ENCODE measurements at regions of chr3 and their contacts with region 1.

Region 1: DNA sequence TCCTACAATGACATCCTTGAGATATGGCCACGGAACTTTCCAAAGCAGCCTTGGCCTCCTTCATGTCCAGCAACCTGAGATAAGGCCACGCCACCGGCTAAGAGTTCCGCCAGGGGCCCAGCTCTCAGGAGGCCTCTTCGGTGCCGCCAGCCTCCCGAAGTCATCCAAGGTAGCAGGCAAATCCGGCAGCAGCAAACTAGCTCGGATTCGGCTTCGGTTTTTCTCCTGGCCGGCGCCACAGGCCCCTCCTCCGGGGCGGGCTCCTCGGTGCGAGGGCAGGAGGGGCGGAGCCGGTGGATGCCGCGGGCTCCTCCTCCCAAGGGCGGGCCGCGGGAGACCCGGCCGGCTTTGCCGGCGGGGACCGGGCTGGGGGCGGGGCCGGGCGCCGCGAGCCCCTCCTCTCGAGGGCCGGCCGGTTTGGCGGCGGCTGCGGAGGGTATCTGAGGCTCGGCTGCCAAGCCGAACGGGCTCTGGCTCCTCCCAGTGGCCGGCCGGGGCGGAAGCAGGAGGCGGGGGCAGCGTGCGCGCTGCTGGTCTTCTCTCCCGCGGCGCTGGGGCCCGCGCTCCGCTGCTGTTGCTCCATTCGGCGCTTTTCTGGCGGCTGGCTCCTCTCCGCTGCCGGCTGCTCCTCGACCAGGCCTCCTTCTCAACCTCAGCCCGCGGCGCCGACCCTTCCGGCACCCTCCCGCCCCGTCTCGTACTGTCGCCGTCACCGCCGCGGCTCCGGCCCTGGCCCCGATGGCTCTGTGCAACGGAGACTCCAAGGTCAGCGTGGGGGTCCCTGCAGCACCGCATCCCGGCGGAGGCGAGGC is at the start of gene GMPS:
- DNase-seq: peak; percentile 61
- ATAC-seq: peak; percentile 92
- H3K4me3 ChIP-seq: peak within 1 kb of the TSS; percentile 85
- H3K27ac ChIP-seq: peak within 1 kb of the TSS; percentile 89
- H3K4me1 ChIP-seq: peaks cover 2% of the 10 kb centered on the region
- H3K27me3 ChIP-seq: no peaks in the 10 kb centered on the region
- CTCF ChIP-seq: peak; percentile 26 to 82 (median 43); a peak in 4 of 6 replicates
- EP300 ChIP-seq: 0 out of 4 replicates have a peak, but pooled peaks of 1 of the 2 experiments have one; percentile 9
- POLR2A ChIP-seq: peak; percentile 91
- RAD21 ChIP-seq: peak; percentile 45
- polyA plus RNA-seq, gene GMPS: 43.3 to 56.2 TPM

Region 2: DNA sequence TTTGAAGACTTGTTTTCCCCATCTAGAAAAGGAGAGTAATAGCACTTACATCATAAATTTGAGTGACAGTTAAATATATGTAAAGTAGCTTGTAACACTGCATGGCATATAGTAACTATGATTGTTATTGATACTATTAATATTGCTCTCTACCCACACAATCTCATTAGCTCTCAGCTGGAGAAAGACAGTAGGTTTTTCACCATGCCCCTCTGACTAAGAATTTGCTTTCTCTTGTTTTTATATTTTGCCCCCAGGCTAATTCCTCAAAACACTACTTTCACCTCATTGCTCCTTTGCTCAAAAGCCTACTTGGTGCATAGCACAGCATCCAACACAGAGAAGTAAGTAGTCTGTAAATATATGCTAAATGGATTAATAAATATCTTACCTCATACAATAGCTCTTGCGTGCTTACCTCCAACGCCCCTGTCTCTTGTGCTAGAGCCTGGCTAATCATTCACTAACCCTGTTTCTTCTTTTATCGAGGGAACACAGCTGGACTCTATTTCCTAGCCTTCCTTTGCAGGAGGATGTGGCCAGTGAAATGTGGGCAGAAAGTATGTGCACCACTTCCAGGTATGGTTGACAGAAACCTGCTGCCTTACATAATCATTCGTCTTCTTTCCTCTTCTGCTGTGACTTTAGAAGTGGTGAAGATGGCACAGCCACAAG is 315.4 kb before region 1 on chr3:
- CTCF ChIA-PET with region 1: no interaction called
- POLR2A ChIA-PET with region 1: no interaction called
- RAD21 ChIA-PET with region 1: no interaction called
- SMC1A ChIA-PET with region 1: no interaction called
- in situ Hi-C with region 1: no loop called
- intact Hi-C with region 1: loop called (anchors 10 kb)
- DNase-seq: peak; percentile 39
- ATAC-seq: peak; percentile 81
- H3K4me3 ChIP-seq: no peak overlapping the region
- H3K27ac ChIP-seq: no peak overlapping the region
- H3K4me1 ChIP-seq: no peaks in the 10 kb centered on the region
- H3K27me3 ChIP-seq: no peaks in the 10 kb centered on the region; a peak in 1 of 4 replicates
- CTCF ChIP-seq: no peak
- EP300 ChIP-seq: no peak; a peak in 1 of 4 replicates
- POLR2A ChIP-seq: no peak
- RAD21 ChIP-seq: no peak

Region 3: GRCh38 chr3:155753036-155753639 is 117.2 kb before region 1 on chr3:
- CTCF ChIA-PET with region 1: interaction called, 10 read pairs
- POLR2A ChIA-PET with region 1: no interaction called
- RAD21 ChIA-PET with region 1: no interaction called
- SMC1A ChIA-PET with region 1: interaction called, 3 read pairs
- in situ Hi-C with region 1: no loop called
- intact Hi-C with region 1: loop called (anchors 5 kb)
- DNase-seq: no peak
- ATAC-seq: peak; percentile 81
- H3K4me3 ChIP-seq: no peak overlapping the region
- H3K27ac ChIP-seq: no peak overlapping the region
- H3K4me1 ChIP-seq: no peaks in the 10 kb centered on the region
- H3K27me3 ChIP-seq: no peaks in the 10 kb centered on the region
- CTCF ChIP-seq: peak; percentile 36 to 51 (median 42); a peak in 3 of 6 replicates
- EP300 ChIP-seq: no peak
- POLR2A ChIP-seq: no peak
- RAD21 ChIP-seq: peak; percentile 59; the same call in 1 of the 2 replicates

Region 4: GRCh38 chr3:155854141-155854940 is 16.0 kb before region 1 on chr3 and contains the start of gene SLC33A1:
- CTCF ChIA-PET with region 1: interaction called, 5 read pairs
- POLR2A ChIA-PET with region 1: interaction called, 22 read pairs
- RAD21 ChIA-PET with region 1: interaction called, 21 read pairs
- SMC1A ChIA-PET with region 1: interaction called, 8 read pairs
- in situ Hi-C with region 1: no loop called
- intact Hi-C with region 1: loop called (anchors 1 kb)
- DNase-seq: peak; percentile 97
- ATAC-seq: peak; percentile 95
- H3K4me3 ChIP-seq: peak within 1 kb of the TSS; percentile 84
- H3K27ac ChIP-seq: peak within 1 kb of the TSS; percentile 93
- H3K4me1 ChIP-seq: no peaks in the 10 kb centered on the region
- H3K27me3 ChIP-seq: no peaks in the 10 kb centered on the region
- CTCF ChIP-seq: no peak
- EP300 ChIP-seq: 0 out of 4 replicates have a peak, but pooled peaks have one; percentile 55 to 56
- POLR2A ChIP-seq: peak; percentile 93
- RAD21 ChIP-seq: no peak
- polyA plus RNA-seq, gene SLC33A1: 6.4 to 6.5 TPM

Region 5: DNA sequence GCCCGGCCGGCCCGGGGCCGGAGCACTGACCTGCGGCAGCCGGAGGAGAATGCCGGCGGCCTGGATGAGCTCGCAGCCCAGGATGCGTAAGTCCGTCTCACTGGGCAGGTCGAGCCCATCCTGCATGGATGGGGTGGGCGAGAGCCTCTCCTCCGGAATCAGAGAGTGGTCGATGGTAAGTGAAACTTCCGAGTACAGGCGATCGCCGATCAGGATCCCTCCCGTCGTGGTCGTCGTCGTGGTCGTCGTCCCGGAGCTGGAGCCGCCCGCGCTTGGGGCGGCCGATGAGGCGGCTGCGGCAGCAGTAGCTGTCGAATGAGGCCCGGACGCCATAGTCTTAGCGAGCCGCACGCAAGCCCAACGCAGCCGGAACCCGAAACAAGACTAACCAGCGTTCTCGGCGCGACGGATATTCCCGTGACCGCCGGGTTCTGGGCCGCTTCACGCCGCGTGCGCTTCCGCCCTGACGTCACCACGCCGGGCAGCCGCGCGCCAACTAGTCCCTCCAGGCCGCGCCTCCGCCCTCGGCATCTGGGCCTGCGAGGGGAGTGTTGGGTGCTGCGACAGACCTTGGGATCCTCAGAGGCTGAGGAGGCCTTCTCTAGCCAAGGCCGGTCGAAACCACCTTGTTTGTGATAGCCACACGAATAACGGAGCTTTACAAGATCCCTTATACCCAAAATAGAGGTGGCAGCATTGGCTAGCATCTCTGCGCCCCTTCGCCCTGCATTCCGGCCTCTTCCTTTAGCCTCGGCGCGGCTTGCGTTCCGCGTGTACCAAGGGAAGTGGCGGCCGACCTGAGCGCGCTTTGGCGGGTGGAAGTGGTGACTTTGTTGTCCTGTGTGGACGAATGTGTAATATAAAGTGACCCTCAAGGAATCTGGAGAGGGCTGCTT is 1289.7 kb after region 1 on chr3 and contains the start of gene CCNL1:
- CTCF ChIA-PET with region 1: no interaction called
- POLR2A ChIA-PET with region 1: no interaction called
- RAD21 ChIA-PET with region 1: no interaction called
- SMC1A ChIA-PET with region 1: no interaction called
- in situ Hi-C with region 1: no loop called
- intact Hi-C with region 1: loop called (anchors 10 kb)
- DNase-seq: peak; percentile 82
- ATAC-seq: peak; percentile 88
- H3K4me3 ChIP-seq: peak within 1 kb of the TSS; percentile 72
- H3K27ac ChIP-seq: peak within 1 kb of the TSS; percentile 99
- H3K4me1 ChIP-seq: peaks cover 11% of the 10 kb centered on the region; the same call in 1 of the 2 replicates
- H3K27me3 ChIP-seq: no peaks in the 10 kb centered on the region
- CTCF ChIP-seq: no peak
- EP300 ChIP-seq: peak; percentile 49 to 66; a peak in 2 of 4 replicates
- POLR2A ChIP-seq: peak; percentile 98
- RAD21 ChIP-seq: no peak; the same call in 1 of the 2 replicates
- polyA plus RNA-seq, gene CCNL1: 22.2 to 39.8 TPM

Measured in GM12878 (cell line).